ENCODE measurements at regions of chr12 and their contacts with region 1.

Region 1: GRCh38 chr12:55817346-55818139 is at the starts of genes ORMDL2 and SARNP:
- DNase-seq: peak; percentile 97
- H3K4me3 Mint-ChIP-seq: no peak within 1 kb of the TSS
- H3K27ac Mint-ChIP-seq: no peak within 1 kb of the TSS
- H3K4me1 Mint-ChIP-seq: peaks cover 35% of the 10 kb centered on the region
- H3K27me3 Mint-ChIP-seq: no peaks in the 10 kb centered on the region
- CTCF ChIP-seq: no peak
- total RNA-seq, gene ORMDL2: 93.6 and 95.4 TPM in 2 replicates
- total RNA-seq, gene SARNP: 64.4 and 73.8 TPM in 2 replicates

Region 2: GRCh38 chr12:55771736-55772135 is 45.8 kb before region 1 on chr12:
- CTCF ChIA-PET with region 1: interaction called, 11 read pairs
- intact Hi-C with region 1: no loop called
- DNase-seq: no peak
- H3K4me3 Mint-ChIP-seq: no peak overlapping the region
- H3K27ac Mint-ChIP-seq: no peak overlapping the region
- H3K4me1 Mint-ChIP-seq: no peaks in the 10 kb centered on the region
- H3K27me3 Mint-ChIP-seq: no peaks in the 10 kb centered on the region
- CTCF ChIP-seq: no peak

Region 3: GRCh38 chr12:55829967-55830600 is 12.5 kb after region 1 on chr12:
- CTCF ChIA-PET with region 1: interaction called, 21 read pairs
- intact Hi-C with region 1: no loop called
- DNase-seq: no peak
- H3K4me3 Mint-ChIP-seq: peak overlapping the region; percentile 91
- H3K27ac Mint-ChIP-seq: peak overlapping the region; percentile 84
- H3K4me1 Mint-ChIP-seq: peaks cover 27% of the 10 kb centered on the region
- H3K27me3 Mint-ChIP-seq: no peaks in the 10 kb centered on the region
- CTCF ChIP-seq: no peak

Region 4: GRCh38 chr12:55940065-55940732 is 122.7 kb after region 1 on chr12:
- CTCF ChIA-PET with region 1: interaction called, 14 read pairs
- intact Hi-C with region 1: no loop called
- DNase-seq: peak; percentile 93
- H3K4me3 Mint-ChIP-seq: no peak overlapping the region
- H3K27ac Mint-ChIP-seq: no peak overlapping the region
- H3K4me1 Mint-ChIP-seq: peaks cover 22% of the 10 kb centered on the region
- H3K27me3 Mint-ChIP-seq: no peaks in the 10 kb centered on the region
- CTCF ChIP-seq: peak; percentile 80

Region 5: DNA sequence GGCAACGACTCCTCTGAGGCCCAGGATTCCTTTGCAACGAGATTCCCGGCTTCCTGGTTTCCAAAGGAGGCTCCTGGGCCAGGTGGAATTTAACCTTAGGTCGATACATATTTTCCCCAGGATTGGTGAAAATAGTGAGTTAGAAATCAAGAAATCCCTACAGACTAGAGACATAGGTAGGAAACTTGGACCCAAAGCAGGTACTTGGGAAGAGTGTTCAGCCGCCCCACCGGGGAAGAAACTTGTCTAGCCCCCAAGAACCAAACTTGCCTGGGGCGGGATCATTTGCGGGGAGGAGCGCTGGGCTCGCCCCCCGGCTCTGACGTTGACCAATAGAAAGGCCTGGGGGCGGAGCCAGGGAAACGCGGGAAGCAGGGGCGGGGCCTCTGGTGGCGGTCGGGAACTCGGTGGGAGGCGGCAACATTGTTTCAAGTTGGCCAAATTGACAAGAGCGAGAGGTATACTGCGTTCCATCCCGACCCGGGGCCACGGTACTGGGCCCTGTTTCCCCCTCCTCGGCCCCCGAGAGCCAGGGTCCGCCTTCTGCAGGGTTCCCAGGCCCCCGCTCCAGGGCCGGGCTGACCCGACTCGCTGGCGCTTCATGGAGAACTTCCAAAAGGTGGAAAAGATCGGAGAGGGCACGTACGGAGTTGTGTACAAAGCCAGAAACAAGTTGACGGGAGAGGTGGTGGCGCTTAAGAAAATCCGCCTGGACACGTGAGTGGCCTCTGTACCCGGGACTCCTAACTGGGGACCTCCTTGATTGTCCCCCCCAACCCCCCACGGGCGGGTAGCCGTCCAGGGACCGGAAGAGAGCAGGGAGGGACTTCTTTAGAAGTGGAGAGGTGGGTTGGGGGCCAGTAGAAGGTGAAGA is 149.1 kb after region 1 on chr12 and contains the start of gene CDK2:
- CTCF ChIA-PET with region 1: no interaction called
- intact Hi-C with region 1: no loop called
- DNase-seq: peak; percentile 96
- H3K4me3 Mint-ChIP-seq: peak within 1 kb of the TSS; percentile 98
- H3K27ac Mint-ChIP-seq: peak within 1 kb of the TSS; percentile 94
- H3K4me1 Mint-ChIP-seq: peaks cover 24% of the 10 kb centered on the region
- H3K27me3 Mint-ChIP-seq: no peaks in the 10 kb centered on the region
- CTCF ChIP-seq: no peak
- total RNA-seq, gene CDK2: 68.9 and 76.4 TPM in 2 replicates

Region 6: DNA sequence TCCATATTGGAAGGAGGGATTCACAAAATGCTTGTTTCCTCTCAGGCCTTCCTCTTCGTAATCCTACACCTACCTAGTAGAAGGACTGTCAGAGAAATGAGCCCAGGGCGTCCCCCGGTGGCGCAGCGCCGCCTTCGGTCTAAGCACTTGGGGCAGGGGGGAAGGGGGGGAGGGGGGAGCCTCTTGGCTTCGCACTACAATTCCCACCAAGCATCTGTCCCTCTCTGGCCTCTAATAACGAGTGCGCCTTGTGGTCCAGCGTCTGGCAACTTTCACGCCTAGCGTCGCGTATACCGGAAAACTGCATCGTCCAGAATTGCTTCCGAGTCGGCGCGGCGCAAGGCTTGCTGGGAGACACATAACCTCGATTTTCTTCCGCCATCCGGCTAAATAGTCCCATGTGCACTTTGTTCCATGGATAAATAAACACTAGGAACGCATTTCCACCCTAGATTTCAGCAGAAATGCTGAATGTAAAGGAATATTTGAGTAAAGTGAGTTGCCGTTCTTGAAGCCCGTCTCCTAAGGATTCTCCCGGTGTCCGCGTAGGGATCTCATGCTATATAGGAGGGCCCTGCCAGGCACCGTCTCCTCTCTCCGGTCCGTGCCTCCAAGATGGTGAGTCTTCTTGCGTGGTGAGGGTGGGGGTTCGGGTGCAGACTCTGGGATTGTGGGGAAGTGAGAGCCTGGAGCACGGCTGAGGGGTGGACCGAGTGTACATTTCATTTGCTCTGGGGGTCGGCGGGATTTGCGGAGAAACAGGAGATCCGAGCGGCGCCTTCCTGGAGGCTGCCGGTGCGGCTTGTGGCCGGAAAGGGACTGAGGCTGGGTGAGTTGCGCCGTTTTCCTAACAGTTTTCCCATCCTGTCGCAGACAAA is 224.2 kb after region 1 on chr12 and contains the start of gene RPS26:
- CTCF ChIA-PET with region 1: no interaction called
- intact Hi-C with region 1: loop called (anchors 5 kb)
- DNase-seq: peak; percentile 93
- H3K4me3 Mint-ChIP-seq: peak within 1 kb of the TSS; percentile 90
- H3K27ac Mint-ChIP-seq: peak within 1 kb of the TSS; percentile 95
- H3K4me1 Mint-ChIP-seq: peaks cover 18% of the 10 kb centered on the region
- H3K27me3 Mint-ChIP-seq: no peaks in the 10 kb centered on the region
- CTCF ChIP-seq: peak; percentile 51
- total RNA-seq, gene RPS26: 50.6 and 50.7 TPM in 2 replicates

Region 7: DNA sequence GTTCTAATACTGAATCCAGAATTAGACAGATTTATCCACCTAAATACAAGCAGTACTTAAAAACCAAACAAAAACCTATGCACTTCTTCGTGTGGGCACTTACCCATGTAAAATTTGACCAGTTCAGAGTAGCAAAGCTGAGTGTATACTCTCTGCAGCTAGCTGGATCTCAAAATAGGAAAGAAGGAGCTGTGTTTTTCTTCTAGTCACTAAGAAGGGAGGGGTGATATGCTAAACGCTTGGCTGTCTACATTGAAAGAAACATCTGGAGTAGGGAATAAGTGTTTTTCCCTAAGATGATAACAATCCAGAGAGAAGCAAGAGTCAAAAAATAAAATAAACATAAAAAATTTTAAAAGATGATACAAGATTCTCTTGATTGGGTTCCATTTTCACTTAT is 724.1 kb after region 1 on chr12:
- CTCF ChIA-PET with region 1: no interaction called
- intact Hi-C with region 1: no loop called
- DNase-seq: no peak
- H3K4me3 Mint-ChIP-seq: no peak overlapping the region
- H3K27ac Mint-ChIP-seq: no peak overlapping the region
- H3K4me1 Mint-ChIP-seq: peaks cover 20% of the 10 kb centered on the region
- H3K27me3 Mint-ChIP-seq: no peaks in the 10 kb centered on the region
- CTCF ChIP-seq: no peak